ENCODE measurements at regions of chr9 and their contacts with region 1.

Region 1: GRCh38 chr9:113454914-113455761 is 8.4 kb upstream of the RGS3 start:
- DNase-seq: peak in 1 of 2 donors; percentile 84
- ATAC-seq: peak; percentile 93
- H3K4me3 ChIP-seq: no peak overlapping the region
- H3K27ac ChIP-seq: peak overlapping the region; percentile 79 to 95
- H3K4me1 ChIP-seq: peaks cover 5 to 8% of the 10 kb centered on the region in 2 donors
- H3K27me3 ChIP-seq: no peaks in the 10 kb centered on the region

Region 2: DNA sequence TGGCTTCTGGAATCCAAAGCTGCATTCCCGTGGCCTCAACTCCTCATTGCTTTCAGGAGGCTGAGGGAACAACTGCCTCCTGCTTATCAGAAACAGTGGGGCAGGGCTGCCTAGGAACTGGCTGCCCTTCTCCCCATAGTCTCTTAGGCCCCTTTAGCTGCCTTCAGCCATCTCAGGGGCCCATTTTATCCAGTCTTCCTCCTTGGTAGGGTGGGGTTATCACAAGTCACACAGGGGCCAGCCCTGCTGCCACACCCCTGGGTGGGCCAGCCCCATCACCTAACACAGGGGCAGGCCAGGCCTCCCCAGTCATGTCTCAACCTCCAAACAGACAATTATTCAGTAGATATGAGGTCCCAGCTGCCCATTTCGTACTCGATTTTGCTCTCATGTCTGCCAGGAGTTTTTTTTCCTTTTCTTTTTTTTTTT is 57.9 kb before region 1 on chr9:
- intact Hi-C with region 1: no loop called
- DNase-seq: no peak
- ATAC-seq: no peak
- H3K4me3 ChIP-seq: no peak overlapping the region
- H3K27ac ChIP-seq: no peak overlapping the region
- H3K4me1 ChIP-seq: no peaks in the 10 kb centered on the region
- H3K27me3 ChIP-seq: no peaks in the 10 kb centered on the region

Region 3: DNA sequence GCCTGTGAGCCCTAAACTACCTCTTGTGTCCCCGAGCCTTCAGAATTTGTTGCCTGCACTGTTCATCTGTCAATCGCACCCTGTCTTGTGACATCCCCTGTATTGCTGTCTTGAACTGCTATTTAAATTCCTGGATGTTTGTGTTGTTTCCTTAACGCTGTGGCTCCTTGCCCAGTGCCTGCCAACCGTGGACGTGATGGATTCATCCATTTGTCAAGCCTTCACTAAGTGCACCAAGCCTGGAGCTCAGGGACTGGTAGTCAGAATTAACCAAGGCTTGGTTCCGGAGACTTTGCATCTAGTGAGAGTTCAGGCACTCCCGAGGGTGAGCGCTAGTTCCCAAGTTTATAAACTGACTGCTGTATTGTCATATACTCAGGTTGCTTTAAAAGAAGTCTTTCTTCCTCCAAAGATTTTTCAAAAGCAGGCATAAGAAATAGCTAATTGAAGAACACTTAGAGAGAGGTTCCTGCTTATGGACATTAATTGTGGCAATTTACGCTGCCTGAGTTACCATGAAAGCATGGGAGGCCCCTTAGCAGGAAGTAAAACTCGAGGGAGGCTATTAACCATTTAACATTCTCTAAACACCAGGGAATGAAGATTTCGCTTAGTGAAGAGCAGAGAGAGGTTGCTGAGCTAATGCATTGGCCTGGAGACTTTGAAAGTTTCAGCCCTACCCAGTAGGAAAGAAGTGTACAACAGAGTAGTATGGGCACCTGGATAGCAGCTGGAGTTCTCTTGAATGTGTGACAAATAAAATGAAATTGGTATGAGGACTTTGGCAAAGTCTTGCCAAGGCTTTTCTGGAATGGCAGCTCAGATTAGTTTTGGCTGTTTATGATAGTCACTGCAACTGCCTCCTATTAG is 37.4 kb after region 1 on chr9:
- intact Hi-C with region 1: loop called (anchors 5 kb)
- DNase-seq: no peak
- ATAC-seq: peak; percentile 21
- H3K4me3 ChIP-seq: no peak overlapping the region
- H3K27ac ChIP-seq: peak overlapping the region; percentile 78 to 92
- H3K4me1 ChIP-seq: peaks cover 0 to 5% of the 10 kb centered on the region in 2 donors
- H3K27me3 ChIP-seq: no peaks in the 10 kb centered on the region

Measured in aorta (tissue), 5 donors.